H1 (cell line): ENCODE measurements at regions of chr17 and their contacts with region 1.

Region 1: GRCh38 chr17:74361230-74362068 is at the start of gene BTBD17:
- DNase-seq: peak in 1 of 2 experiments; percentile 97
- H3K4me3 ChIP-seq: peak within 1 kb of the TSS in 3 of 4 experiments; percentile 24 to 54 (median 45); a peak in 6 of 8 replicates
- H3K27ac ChIP-seq: peak within 1 kb of the TSS; percentile 48
- H3K4me1 ChIP-seq: peaks cover 5 to 29% (median 19%) of the 10 kb centered on the region in 4 experiments
- H3K27me3 ChIP-seq: no peaks in the 10 kb centered on the region
- CTCF ChIP-seq: peak; percentile 82 to 100 (median 93)
- EP300 ChIP-seq: no peak
- POLR2A ChIP-seq: peak in 1 of 2 experiments; percentile 40; a peak in 1 of 3 replicates
- RAD21 ChIP-seq: peak; percentile 62 to 73
- total RNA-seq, gene BTBD17: 7.0 and 7.8 TPM in 2 replicates

Region 2: GRCh38 chr17:74218436-74218835 is 143.0 kb before region 1 on chr17:
- CTCF ChIA-PET with region 1: no interaction called
- POLR2A ChIA-PET with region 1: no interaction called
- DNase-seq: no peak
- H3K4me3 ChIP-seq: no peak overlapping the region
- H3K27ac ChIP-seq: no peak overlapping the region
- H3K4me1 ChIP-seq: peaks cover 0 to 7% (median 0%) of the 10 kb centered on the region in 4 experiments; a peak in 3 of 7 replicates
- H3K27me3 ChIP-seq: peaks cover 0 to 10% (median 5%) of the 10 kb centered on the region in 4 experiments; a peak in 5 of 7 replicates
- CTCF ChIP-seq: no peak
- EP300 ChIP-seq: no peak
- POLR2A ChIP-seq: no peak
- RAD21 ChIP-seq: no peak

Region 3: DNA sequence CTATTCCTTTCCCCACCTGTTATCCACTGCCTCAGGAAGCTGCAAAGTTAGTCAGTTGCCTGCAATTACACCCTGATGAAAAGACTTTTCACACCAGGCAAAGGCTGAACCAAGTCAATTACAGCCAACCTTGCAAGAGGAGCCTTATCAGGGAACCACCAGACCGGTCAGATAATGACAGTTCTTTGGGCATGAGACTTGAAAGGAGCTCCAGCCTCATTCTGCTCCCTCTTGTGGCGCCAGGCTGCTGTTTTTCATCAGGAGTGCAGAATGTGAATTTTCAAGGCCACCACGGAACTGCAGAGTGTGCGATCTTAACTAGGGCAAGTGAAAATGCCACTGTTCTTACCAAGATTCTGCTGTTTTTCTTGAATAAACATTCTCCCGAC is 64.9 kb before region 1 on chr17:
- CTCF ChIA-PET with region 1: interaction called, 64 read pairs
- POLR2A ChIA-PET with region 1: interaction called, 4 read pairs
- DNase-seq: peak; percentile 23 to 58
- H3K4me3 ChIP-seq: no peak overlapping the region
- H3K27ac ChIP-seq: no peak overlapping the region
- H3K4me1 ChIP-seq: no peaks in the 10 kb centered on the region
- H3K27me3 ChIP-seq: no peaks in the 10 kb centered on the region; a peak in 1 of 7 replicates
- CTCF ChIP-seq: peak; percentile 60 to 80 (median 76)
- EP300 ChIP-seq: no peak
- POLR2A ChIP-seq: no peak
- RAD21 ChIP-seq: peak; percentile 43 to 70; a peak in 3 of 4 replicates

Region 4: GRCh38 chr17:74305865-74306654 is 55.4 kb before region 1 on chr17:
- CTCF ChIA-PET with region 1: interaction called, 64 read pairs
- POLR2A ChIA-PET with region 1: interaction called, 4 read pairs
- DNase-seq: no peak
- H3K4me3 ChIP-seq: no peak overlapping the region
- H3K27ac ChIP-seq: no peak overlapping the region
- H3K4me1 ChIP-seq: no peaks in the 10 kb centered on the region
- H3K27me3 ChIP-seq: no peaks in the 10 kb centered on the region
- CTCF ChIP-seq: peak in 2 of 3 experiments; percentile 43 to 57; a peak in 3 of 4 replicates
- EP300 ChIP-seq: no peak
- POLR2A ChIP-seq: no peak
- RAD21 ChIP-seq: peak; percentile 62 to 74

Region 5: DNA sequence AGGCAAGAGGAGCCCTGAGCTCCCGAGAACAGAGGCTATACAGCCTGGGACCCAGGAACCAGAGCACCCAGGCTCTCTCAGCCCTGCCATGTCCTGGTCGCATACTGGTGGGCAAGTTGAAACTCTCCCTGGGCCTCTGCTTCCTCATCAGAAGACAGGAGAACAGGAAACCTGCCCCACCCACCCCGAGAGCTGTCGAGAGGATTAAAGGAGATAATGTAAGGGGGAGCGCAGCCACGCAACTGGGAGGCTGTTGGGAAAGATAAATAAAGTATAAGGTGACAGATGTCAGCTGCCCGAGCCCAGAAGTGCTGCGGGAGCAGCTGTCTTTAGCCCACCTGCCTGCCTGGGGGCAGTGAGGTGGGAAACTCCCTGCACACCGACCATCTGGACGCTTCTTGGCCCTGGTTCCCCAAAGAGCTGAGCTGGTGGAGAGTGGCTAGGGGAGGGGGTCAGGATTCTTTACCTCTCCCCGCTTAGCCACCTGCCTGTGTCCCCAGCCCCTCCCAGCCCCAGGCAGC is 28.6 kb before region 1 on chr17:
- CTCF ChIA-PET with region 1: interaction called, 11 read pairs
- POLR2A ChIA-PET with region 1: no interaction called
- DNase-seq: no peak
- H3K4me3 ChIP-seq: no peak overlapping the region
- H3K27ac ChIP-seq: no peak overlapping the region
- H3K4me1 ChIP-seq: peaks cover 3 to 13% (median 3%) of the 10 kb centered on the region in 4 experiments; a peak in 5 of 7 replicates
- H3K27me3 ChIP-seq: peaks cover 0 to 4% (median 3%) of the 10 kb centered on the region in 4 experiments; a peak in 3 of 7 replicates
- CTCF ChIP-seq: no peak
- EP300 ChIP-seq: no peak
- POLR2A ChIP-seq: no peak
- RAD21 ChIP-seq: no peak

Region 6: DNA sequence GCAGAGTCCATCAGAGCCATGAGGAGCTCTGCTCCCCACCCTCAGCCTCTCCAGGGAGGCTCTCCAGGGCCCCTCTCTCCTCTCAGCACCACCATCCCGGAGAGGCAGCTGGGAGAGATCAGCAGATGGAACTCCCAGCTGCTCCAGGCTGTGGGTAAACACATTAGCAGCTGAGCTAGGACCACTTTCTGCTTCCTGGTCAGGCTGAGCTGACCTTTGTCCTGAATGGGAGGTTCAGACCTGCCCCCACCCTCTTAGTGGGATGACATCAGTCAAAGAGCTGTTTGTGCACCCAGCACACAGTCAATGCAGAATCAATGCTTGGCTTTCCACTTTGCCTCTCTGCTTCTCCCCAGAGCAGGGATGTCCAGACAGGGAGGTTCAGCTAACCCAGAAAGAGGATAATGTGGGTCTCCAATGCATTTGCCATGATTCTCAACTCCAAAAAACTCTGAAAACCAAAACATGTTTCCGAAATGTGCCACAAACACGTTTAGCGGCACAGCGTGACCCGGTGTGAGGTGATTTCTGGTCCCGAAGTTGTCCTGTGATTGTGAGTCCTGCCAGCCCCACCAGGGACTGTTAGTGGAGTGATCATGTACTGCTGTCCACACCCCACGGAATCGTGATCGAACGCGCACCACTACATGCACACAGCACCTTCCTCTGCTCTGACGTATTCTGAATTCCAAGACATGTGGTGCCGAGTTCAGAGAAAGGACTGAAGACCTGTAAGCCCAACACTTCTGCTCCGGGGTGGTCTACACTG is 12.6 kb after region 1 on chr17:
- CTCF ChIA-PET with region 1: interaction called, 106 read pairs
- POLR2A ChIA-PET with region 1: interaction called, 3 read pairs
- DNase-seq: no peak
- H3K4me3 ChIP-seq: no peak overlapping the region
- H3K27ac ChIP-seq: no peak overlapping the region
- H3K4me1 ChIP-seq: peaks cover 0 to 6% (median 3%) of the 10 kb centered on the region in 4 experiments; a peak in 6 of 7 replicates
- H3K27me3 ChIP-seq: peaks cover 0 to 1% (median 0%) of the 10 kb centered on the region in 4 experiments; a peak in 4 of 7 replicates
- CTCF ChIP-seq: no peak
- EP300 ChIP-seq: no peak
- POLR2A ChIP-seq: no peak
- RAD21 ChIP-seq: no peak